MCF 10A (cell line): ENCODE measurements at regions of chr2 and their contacts with region 1.

Region 1: DNA sequence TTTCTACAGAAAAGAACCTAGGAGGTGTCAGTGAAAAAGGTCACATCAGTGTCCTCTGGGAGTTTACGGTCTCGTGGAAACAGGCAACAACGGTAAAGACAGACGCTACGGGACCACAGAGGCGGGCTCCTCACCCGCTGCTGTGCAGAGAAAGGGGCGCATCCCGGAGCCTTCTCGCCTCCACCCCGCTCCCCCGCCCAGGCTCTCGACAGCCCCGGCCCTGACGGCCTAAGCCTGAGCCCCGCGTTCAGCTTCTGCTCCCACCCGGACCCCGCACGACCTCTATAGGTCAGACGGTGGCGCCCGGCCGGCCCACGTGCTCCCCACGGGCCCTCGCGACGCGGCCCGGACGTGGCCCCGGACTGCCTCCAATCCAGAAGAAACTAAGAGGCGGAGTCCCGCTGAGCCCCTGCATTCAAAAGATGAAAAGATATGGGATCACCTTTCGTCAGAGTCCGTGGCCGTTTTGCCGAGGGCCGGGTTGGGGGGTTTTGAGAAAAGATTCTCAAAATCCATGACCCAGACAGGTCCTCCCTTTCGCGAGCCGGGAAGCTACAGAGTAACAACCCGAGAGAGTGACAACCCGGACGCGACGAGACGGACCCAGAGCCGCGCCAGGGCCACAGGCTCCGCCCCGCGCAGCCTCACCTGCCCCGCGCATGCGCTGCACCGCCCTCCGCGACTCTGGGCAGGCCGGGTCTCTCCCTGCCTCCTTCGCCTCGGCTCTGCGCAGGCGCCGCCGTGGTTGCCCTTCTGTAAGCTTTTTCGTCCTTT is at the start of gene ZC3H8:
- DNase-seq: peak; percentile 90
- H3K4me3 Mint-ChIP-seq: peak within 1 kb of the TSS; percentile 77
- H3K27ac Mint-ChIP-seq: peak within 1 kb of the TSS; percentile 76
- H3K4me1 Mint-ChIP-seq: peaks cover 8% of the 10 kb centered on the region
- H3K27me3 Mint-ChIP-seq: no peaks in the 10 kb centered on the region
- CTCF ChIP-seq: no peak
- total RNA-seq, gene ZC3H8: 20.6 and 30.5 TPM in 2 replicates

Region 2: GRCh38 chr2:112092286-112093041 is 162.2 kb before region 1 on chr2:
- CTCF ChIA-PET with region 1: no interaction called
- POLR2A ChIA-PET with region 1: no interaction called
- intact Hi-C with region 1: no loop called
- DNase-seq: peak; percentile 27
- H3K4me3 Mint-ChIP-seq: no peak overlapping the region
- H3K27ac Mint-ChIP-seq: peak overlapping the region; percentile 65
- H3K4me1 Mint-ChIP-seq: peaks cover 14% of the 10 kb centered on the region
- H3K27me3 Mint-ChIP-seq: no peaks in the 10 kb centered on the region
- CTCF ChIP-seq: no peak

Region 3: DNA sequence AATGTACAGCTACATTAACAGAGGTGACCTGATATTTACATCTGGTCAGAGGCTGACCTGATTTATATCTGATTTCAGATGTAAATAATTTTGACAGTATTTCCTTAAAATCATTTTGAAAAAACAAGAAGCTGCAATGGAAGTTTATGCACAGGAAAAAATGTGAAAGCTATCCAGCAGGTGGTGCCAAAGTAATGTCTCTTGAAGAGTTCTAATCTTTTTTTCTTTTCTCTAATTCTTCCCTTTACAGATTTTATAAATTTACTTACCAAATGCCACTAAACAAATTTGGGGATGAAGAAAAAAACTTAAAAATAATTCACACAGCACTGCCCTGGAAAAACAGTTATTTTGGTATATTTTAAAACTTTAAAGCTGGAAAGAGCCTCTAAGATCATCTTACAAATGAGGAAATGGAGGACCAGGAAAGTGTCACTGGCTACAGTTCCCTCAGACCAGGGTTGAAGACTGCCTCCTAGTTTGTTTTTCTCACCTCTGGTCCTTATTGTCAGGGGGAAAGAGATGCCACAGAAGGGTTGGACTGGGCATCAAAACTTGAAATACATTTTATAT is 132.9 kb before region 1 on chr2:
- CTCF ChIA-PET with region 1: interaction called, 8 read pairs
- POLR2A ChIA-PET with region 1: interaction called, 3 read pairs
- intact Hi-C with region 1: loop called (anchors 2 kb)
- DNase-seq: peak; percentile 47
- H3K4me3 Mint-ChIP-seq: no peak overlapping the region
- H3K27ac Mint-ChIP-seq: no peak overlapping the region
- H3K4me1 Mint-ChIP-seq: no peaks in the 10 kb centered on the region
- H3K27me3 Mint-ChIP-seq: no peaks in the 10 kb centered on the region
- CTCF ChIP-seq: peak; percentile 52

Region 4: DNA sequence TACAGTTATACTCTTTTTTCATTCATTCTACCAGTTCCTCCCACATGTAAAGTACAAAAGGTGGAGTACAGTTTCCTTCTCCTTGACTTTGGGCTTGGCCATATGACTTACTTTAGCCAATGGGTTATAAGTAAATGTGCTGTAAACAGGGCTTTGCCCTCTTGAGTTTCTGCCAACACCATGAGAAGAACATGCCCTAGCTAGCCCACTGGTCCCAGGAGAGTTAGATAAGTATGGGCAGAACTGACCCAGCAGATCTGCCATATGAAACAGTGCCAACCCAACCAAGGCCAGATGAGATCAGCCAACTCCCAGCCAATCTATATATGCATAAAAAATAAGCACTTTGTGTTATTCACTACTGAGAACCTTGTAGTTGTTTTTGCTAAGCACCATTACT is 25.3 kb before region 1 on chr2:
- CTCF ChIA-PET with region 1: interaction called, 8 read pairs
- POLR2A ChIA-PET with region 1: interaction called, 12 read pairs
- intact Hi-C with region 1: no loop called
- DNase-seq: peak; percentile 96
- H3K4me3 Mint-ChIP-seq: no peak overlapping the region
- H3K27ac Mint-ChIP-seq: peak overlapping the region; percentile 70
- H3K4me1 Mint-ChIP-seq: peaks cover 12% of the 10 kb centered on the region
- H3K27me3 Mint-ChIP-seq: no peaks in the 10 kb centered on the region
- CTCF ChIP-seq: no peak

Region 5: DNA sequence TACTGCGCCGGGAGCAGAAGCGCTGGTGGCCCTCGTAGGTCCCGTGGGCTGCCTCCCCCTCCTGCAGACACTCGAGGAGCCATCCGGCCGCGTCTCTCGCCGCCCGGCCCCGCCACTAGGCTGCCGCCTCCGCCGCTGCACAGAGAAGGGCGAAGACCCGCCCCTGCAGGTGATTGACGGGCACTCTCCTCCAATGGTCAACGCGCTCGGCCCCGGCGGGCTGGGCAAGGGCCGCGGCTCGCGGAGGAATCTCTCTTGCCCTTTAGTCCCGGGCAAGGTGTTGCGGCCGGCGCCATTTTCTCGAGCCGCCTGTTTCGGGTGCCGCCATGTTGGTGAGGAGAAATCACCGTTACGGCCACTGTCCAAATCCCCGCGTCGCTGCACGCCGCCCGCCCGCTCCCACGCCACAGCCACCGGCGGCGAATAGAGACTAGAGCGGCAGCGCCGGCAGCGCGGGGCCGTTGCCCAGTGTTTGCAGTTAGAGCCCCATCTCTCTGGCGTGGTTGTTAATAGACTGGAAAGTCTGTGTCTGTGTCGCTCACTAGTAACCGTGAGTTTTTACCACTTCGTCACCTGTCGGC is 20.7 kb after region 1 on chr2 and contains the start of gene ZC3H6:
- CTCF ChIA-PET with region 1: interaction called, 7 read pairs
- POLR2A ChIA-PET with region 1: interaction called, 28 read pairs
- intact Hi-C with region 1: no loop called
- DNase-seq: peak; percentile 94
- H3K4me3 Mint-ChIP-seq: peak within 1 kb of the TSS; percentile 84
- H3K27ac Mint-ChIP-seq: peak within 1 kb of the TSS; percentile 96
- H3K4me1 Mint-ChIP-seq: no peaks in the 10 kb centered on the region
- H3K27me3 Mint-ChIP-seq: no peaks in the 10 kb centered on the region
- CTCF ChIP-seq: peak; percentile 6
- total RNA-seq, gene ZC3H6: 16.9 and 18.6 TPM in 2 replicates